Motor neuron (in vitro differentiated cells): ENCODE measurements at regions of chr10 and their contacts with region 1.

Region 1: DNA sequence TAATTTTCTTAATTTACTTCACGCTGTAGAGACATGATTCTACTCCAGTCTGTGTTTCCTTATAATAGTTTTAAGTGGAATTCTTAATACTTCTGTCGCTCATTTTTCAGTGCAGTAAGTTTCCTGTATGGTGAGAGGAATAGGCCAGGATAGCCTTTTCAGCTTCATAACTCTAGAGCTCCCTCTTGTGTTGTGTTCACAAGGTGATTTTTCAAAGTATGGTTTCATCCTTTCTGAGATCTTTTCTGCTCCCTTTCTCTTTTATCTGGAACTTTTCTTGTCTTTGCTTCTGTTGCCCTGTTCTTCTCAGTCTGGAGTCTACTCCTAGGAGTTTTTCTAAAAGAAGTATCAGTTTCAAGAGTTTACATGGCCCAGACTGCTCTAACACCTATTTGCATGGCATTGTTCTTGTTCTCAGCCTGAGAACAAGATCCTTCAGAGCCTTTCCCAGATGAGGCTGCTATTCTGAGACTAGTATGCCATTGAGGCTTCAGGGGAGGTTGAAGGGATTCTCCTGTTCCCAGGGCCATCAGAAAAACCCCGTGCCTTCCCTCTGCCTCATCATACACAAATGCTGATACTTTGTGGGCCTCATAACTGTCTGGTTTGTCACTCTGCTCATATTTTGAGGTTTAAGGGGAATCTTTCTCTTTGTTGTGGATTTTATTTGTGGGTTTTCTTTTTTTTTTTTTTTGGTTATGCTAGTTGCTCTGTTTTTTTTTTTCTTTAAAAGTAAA is 21.8 kb downstream of the NET1 start:
- ATAC-seq: peak in 5 of 8 experiments; percentile 48 to 93 (median 83)
- H3K4me3 ChIP-seq: no peak overlapping the region
- H3K27ac ChIP-seq: no peak overlapping the region
- H3K4me1 ChIP-seq: no peaks in the 10 kb centered on the region

Region 2: GRCh38 chr10:4813023-4813422 is 621.2 kb before region 1 on chr10:
- in situ Hi-C with region 1: loop called in 1 of 9 experiments (anchors 10 kb)
- ATAC-seq: peak; percentile 59 to 97 (median 92)
- H3K4me3 ChIP-seq: no peak overlapping the region
- H3K27ac ChIP-seq: no peak overlapping the region
- H3K4me1 ChIP-seq: peaks cover 0 to 4% of the 10 kb centered on the region in 2 donors

Region 3: GRCh38 chr10:5971315-5971832 is 537.2 kb after region 1 on chr10:
- in situ Hi-C with region 1: no loop called
- ATAC-seq: peak in 2 of 8 experiments; percentile 50 to 72
- H3K4me3 ChIP-seq: no peak overlapping the region
- H3K27ac ChIP-seq: no peak overlapping the region
- H3K4me1 ChIP-seq: no peaks in the 10 kb centered on the region